ENCODE measurements at regions of chr3 and their contacts with region 1.

Region 1: GRCh38 chr3:141311496-141312353 is 56.6 kb upstream of the ZBTB38 start:
- DNase-seq: peak; percentile 96
- ATAC-seq: peak; percentile 93
- H3K4me3 Mint-ChIP-seq: peak overlapping the region; percentile 99
- H3K27ac Mint-ChIP-seq: peak overlapping the region; percentile 100
- H3K4me1 Mint-ChIP-seq: peaks cover 48% of the 10 kb centered on the region
- H3K27me3 Mint-ChIP-seq: no peaks in the 10 kb centered on the region

Region 2: DNA sequence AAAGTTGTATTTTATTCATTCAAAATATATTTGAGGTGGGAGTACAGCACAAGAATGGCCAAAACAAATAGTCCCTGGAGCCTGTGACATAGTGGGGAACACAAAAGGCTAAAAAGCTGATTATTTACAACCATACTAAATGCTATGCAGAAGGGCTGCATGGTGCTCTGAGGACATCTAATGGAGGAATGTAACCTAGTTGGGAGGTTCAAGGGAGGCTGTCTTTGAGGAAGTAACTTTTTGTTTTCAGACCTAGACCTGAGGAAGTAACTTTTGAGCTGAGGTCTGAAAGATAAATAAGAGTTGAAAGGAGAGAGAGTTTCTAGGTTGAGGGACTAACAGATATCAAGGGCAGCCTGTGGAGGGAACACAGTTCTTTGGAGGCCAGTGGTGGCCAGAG is 140.3 kb after region 1 on chr3:
- POLR2A ChIA-PET with region 1: interaction called, 40 read pairs
- DNase-seq: no peak
- ATAC-seq: peak; percentile 96
- H3K4me3 Mint-ChIP-seq: no peak overlapping the region
- H3K27ac Mint-ChIP-seq: no peak overlapping the region
- H3K4me1 Mint-ChIP-seq: peaks cover 10% of the 10 kb centered on the region
- H3K27me3 Mint-ChIP-seq: no peaks in the 10 kb centered on the region